Esophagus muscularis mucosa (tissue), 4 donors: ENCODE measurements at regions of chr7 and their contacts with region 1.

Region 1: DNA sequence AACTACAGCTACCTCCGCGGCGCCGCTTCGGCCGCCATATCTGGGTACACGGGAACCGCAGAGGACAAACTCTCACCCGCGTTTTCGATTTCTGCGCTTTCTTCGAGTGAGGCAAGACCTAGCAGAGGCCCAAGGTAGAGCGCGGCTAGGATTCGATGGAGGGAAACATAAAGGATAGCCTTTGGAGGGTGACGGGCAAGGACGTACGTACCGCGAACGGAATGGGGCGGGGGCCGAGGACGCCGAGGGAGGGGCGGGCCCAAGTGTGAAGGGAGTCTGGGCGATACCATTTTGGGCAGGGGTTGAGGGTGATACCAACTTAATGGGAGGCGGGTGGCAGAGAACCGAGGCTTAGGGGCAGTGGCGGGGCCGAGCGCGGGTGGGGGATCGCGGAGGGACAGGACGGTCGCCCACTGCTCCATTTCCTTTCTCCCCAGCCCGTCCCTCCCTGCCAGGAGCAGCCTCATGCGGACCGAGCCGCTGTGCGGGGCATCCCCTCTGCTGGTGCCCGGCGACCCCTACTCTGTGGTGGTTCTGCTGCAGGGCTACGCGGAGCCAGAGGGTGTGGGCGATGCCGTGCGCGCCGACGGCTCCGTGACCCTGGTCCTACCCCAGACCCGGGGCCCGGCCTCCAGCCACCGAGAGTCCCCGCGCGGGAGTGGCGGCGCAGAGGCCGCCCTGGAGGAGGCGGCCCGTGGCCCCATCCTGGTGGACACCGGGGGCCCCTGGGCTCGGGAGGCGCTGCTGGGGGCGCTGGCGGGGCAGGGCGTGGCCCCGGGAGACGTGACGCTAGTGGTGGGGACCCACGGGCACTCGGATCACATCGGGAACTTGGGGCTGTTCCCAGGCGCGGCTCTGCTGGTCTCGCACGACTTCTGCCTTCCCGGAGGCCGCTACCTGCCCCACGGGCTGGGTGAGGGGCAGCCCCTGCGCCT is at the start of gene MBLAC1:
- DNase-seq: peak; percentile 97
- H3K4me3 ChIP-seq: peak within 1 kb of the TSS; percentile 78 to 99 (median 95)
- H3K27ac ChIP-seq: peak within 1 kb of the TSS; percentile 92 to 97 (median 96)
- H3K4me1 ChIP-seq: peaks cover 24 to 47% (median 39%) of the 10 kb centered on the region in 4 donors
- H3K27me3 ChIP-seq: no peaks in the 10 kb centered on the region
- CTCF ChIP-seq: peak in 1 of 3 experiments; percentile 16
- EP300 ChIP-seq: no peak
- POLR2A ChIP-seq: no peak
- total RNA-seq, gene MBLAC1: 3.1 to 8.8 (median 5.0) TPM

Region 2: DNA sequence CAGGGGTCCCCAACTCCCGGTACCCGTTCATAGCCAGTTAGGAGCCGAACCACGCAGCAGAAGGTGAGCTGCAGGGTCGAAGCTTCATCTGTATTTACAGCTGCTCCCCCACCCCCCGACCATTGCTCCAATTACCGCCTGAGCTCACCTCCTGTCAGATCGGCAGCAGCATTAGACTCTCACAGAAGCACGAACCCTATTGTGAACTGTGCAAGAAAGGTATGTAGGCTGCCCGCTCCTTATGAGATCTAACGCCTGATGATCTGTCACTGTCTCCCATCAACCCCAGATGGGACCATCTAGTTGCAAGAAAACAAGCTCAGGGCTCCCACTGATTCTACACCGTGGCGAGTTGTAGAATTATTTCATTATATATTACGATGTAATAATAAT is 136.7 kb before region 1 on chr7:
- intact Hi-C with region 1: loop called (anchors 5 kb)
- DNase-seq: no peak
- H3K4me3 ChIP-seq: peak overlapping the region; percentile 21 to 35 (median 28)
- H3K27ac ChIP-seq: no peak overlapping the region
- H3K4me1 ChIP-seq: peaks cover 14 to 22% (median 18%) of the 10 kb centered on the region in 4 donors
- H3K27me3 ChIP-seq: no peaks in the 10 kb centered on the region
- CTCF ChIP-seq: no peak
- EP300 ChIP-seq: no peak
- POLR2A ChIP-seq: no peak

Region 3: DNA sequence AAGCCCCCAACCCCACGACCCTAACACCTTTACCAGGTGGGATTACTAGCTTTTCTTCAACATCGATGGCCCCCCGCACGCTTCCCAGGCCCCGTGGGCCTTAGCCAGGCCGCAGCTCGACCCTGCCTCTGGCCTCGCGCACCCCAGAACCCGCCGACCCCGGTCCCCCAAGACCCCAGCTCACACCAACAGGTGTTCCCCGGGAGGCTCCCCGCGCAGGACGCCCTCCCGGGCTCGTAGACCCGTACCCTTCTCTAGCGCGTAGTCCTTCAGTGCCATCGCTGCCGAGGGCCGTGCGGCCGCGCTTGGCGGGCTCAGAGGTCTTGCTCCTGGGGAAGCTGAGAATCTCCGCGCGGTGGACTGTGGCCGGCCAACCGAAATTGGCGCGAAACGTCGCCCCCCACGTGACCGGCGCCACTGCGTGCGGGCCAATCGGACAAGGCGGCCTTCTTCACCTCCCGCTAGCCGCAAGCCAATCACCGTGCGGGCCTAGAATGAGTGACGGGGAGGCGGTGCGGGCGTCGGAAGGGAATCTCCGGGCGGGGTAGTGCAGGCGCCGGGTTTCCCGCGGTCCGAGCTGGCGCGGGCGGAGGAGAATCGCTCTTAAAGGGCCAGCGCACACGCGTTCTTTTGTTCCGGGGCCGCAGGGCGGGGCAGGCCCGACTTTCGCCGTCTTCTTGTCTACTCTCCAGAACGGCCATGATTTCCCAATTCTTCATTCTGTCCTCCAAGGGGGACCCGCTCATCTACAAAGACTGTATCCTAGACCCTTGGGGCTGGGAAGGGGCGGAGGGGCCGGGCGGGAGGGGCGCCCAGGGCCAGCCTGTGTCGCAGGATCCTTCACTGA is 26.0 kb before region 1 on chr7 and contains the starts of genes AP4M1 and MCM7:
- intact Hi-C with region 1: loop called (anchors 2 kb)
- DNase-seq: peak; percentile 100
- H3K4me3 ChIP-seq: peak within 1 kb of the TSS; percentile 69 to 86 (median 82)
- H3K27ac ChIP-seq: peak within 1 kb of the TSS; percentile 93 to 98 (median 96)
- H3K4me1 ChIP-seq: peaks cover 19 to 39% (median 28%) of the 10 kb centered on the region in 4 donors
- H3K27me3 ChIP-seq: no peaks in the 10 kb centered on the region
- CTCF ChIP-seq: no peak
- EP300 ChIP-seq: no peak
- POLR2A ChIP-seq: no peak
- total RNA-seq, gene AP4M1: 19.9 to 31.7 (median 26.1) TPM
- total RNA-seq, gene MCM7: 35.3 to 60.3 (median 41.1) TPM

Region 4: GRCh38 chr7:100148559-100149350 is 21.6 kb after region 1 on chr7 and contains the start of gene LAMTOR4:
- intact Hi-C with region 1: loop called (anchors 1 kb)
- DNase-seq: peak; percentile 99
- H3K4me3 ChIP-seq: peak within 1 kb of the TSS; percentile 81 to 99 (median 90)
- H3K27ac ChIP-seq: peak within 1 kb of the TSS; percentile 87 to 94 (median 92)
- H3K4me1 ChIP-seq: peaks cover 10 to 34% (median 25%) of the 10 kb centered on the region in 4 donors
- H3K27me3 ChIP-seq: no peaks in the 10 kb centered on the region
- CTCF ChIP-seq: peak in 1 of 3 experiments; percentile 25
- EP300 ChIP-seq: no peak
- POLR2A ChIP-seq: no peak
- total RNA-seq, gene LAMTOR4: 117 to 184 (median 152) TPM

Region 5: GRCh38 chr7:100384628-100385294 is 257.6 kb after region 1 on chr7:
- intact Hi-C with region 1: no loop called
- DNase-seq: no peak
- H3K4me3 ChIP-seq: no peak overlapping the region
- H3K27ac ChIP-seq: no peak overlapping the region
- H3K4me1 ChIP-seq: peaks cover 0 to 4% (median 0%) of the 10 kb centered on the region in 4 donors
- H3K27me3 ChIP-seq: no peaks in the 10 kb centered on the region
- CTCF ChIP-seq: no peak
- EP300 ChIP-seq: no peak
- POLR2A ChIP-seq: no peak